CD8-positive, alpha-beta T cell (primary cell): ENCODE measurements at regions of chr12 and their contacts with region 1.

Region 1: DNA sequence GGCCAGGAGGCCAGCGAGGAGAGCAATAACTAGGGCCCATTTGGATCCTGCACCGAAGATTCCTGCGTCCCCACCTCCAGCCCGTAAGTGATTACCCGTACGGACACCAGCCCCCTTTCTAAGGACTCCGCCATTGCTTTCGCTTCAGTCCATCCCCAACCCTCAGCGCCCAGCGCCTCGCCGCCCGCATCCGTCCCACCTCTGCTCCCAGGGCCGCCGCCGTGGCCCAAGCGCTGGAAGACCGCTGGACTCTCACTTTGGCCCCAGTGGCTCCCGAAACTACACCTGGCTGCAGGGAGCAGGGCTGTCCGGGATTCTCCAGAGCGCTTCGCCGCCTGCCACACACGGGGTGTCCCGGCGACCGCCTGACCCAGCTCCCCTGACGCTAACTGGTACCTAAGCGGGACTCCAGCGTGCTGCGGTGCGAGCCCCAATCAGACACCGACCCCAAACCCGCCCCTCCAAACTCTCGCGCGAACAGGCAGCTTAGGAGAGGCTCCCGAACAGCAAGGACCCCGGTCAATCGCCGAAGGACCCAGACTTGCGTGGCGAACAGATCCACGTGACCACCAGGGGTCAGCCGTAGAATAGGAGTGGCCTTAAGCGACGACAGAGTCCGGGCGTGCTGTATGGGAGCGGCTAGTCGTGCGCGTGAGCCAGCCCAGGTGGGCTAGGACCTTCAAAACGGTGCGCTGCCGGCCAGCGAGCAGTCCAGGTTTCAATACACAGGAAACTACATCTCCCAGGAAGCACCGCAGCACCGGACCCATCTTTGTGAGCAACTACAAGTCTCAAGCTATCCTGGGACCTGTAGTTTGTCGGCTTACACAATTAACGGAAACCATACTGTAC is at the start of gene CNPY2:
- DNase-seq: peak; percentile 89 to 97 (median 95)
- ATAC-seq: peak; percentile 92
- H3K4me3 ChIP-seq: peak within 1 kb of the TSS; percentile 86 to 99
- H3K4me3 Mint-ChIP-seq: peak within 1 kb of the TSS; percentile 99
- H3K27ac ChIP-seq: peak within 1 kb of the TSS; percentile 70 to 98
- H3K27ac Mint-ChIP-seq: peak within 1 kb of the TSS; percentile 98
- H3K4me1 ChIP-seq: peaks cover 10% of the 10 kb centered on the region
- H3K4me1 Mint-ChIP-seq: peaks cover 16% of the 10 kb centered on the region
- H3K27me3 ChIP-seq: no peaks in the 10 kb centered on the region
- H3K27me3 Mint-ChIP-seq: no peaks in the 10 kb centered on the region
- CTCF ChIP-seq: no peak
- total RNA-seq, gene CNPY2: 23.5 to 33.9 TPM

Region 2: GRCh38 chr12:56333679-56334489 is 18.0 kb after region 1 on chr12 and contains the start of gene PAN2:
- CTCF ChIA-PET with region 1: no interaction called
- POLR2A ChIA-PET with region 1: interaction called, 15 read pairs
- intact Hi-C with region 1: loop called (anchors 1 kb)
- DNase-seq: peak; percentile 87 to 98 (median 93)
- ATAC-seq: peak; percentile 80
- H3K4me3 ChIP-seq: peak within 1 kb of the TSS; percentile 47 to 85
- H3K4me3 Mint-ChIP-seq: peak within 1 kb of the TSS; percentile 96
- H3K27ac ChIP-seq: peak within 1 kb of the TSS; percentile 97 to 100
- H3K27ac Mint-ChIP-seq: peak within 1 kb of the TSS; percentile 100
- H3K4me1 ChIP-seq: peaks cover 27% of the 10 kb centered on the region
- H3K4me1 Mint-ChIP-seq: peaks cover 53% of the 10 kb centered on the region
- H3K27me3 ChIP-seq: no peaks in the 10 kb centered on the region
- H3K27me3 Mint-ChIP-seq: no peaks in the 10 kb centered on the region
- CTCF ChIP-seq: peak; percentile 64
- total RNA-seq, gene PAN2: 111 to 113 TPM